Activated T-helper 1 cell treated with anti-CD3 and anti-CD28 coated beads, Interleukin-12 subunit alpha, Interleukin-12 subunit beta, Interleukin-2, Interleukin-4 antibody, amounts not matched to agents 30 ng/mL and 10 ng/mL and 1 ng/mL, durations not matched to agents 14 hours and 24 hours and 36 hours (primary cell): ENCODE measurements at regions of chr11 and their contacts with region 1.

Region 1: DNA sequence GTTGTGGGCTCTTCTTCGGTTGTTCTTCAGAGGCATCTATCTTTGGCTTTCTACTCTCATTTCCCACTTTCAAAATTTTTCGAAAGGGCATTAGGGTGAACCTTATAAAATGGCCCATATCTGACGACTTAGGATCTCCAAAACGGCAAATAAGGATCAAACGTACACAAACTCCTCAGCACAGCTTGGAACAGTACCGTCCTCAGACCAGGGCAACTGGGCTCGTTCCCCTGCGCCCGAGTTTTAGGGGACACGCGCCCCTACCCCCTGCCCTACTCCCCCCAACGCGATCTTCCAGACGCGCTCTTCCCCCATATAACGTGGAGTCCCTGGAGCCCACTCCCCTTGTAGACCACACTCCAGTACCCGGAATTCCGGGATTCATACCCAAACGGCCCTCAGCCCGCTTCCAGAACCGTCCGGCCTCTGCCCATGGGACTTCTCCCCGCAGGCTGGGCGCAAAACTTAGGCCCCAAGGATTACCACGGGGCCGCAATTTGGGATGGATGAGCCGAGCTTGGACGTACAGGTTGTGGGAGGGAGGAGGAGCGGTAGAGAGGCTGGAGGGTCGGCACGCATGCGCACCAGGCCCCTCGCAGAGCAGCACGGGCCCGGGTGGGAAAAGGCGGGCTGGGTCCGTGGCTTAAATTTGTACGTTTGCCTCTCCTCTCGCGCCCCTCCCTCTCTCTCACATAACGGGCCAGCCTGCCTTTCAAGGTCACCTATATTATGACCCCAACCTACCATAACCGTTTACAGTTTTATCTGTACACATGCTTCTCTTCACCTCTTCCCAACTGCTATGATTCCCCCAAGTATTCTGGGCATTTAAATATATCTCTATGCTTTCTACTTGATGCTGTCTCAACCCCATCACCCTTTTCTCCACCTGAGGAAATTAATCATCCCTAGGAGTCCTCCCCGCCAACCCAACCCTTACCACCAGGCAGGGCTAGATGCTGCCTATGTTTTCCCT is 3.4 kb downstream of the CCDC89 start:
- DNase-seq: peak; percentile 35
- H3K4me3 Mint-ChIP-seq: peak overlapping the region; percentile 83
- H3K27ac Mint-ChIP-seq: peak overlapping the region; percentile 78
- H3K4me1 Mint-ChIP-seq: peaks cover 16% of the 10 kb centered on the region
- H3K27me3 Mint-ChIP-seq: peaks cover 4% of the 10 kb centered on the region

Region 2: DNA sequence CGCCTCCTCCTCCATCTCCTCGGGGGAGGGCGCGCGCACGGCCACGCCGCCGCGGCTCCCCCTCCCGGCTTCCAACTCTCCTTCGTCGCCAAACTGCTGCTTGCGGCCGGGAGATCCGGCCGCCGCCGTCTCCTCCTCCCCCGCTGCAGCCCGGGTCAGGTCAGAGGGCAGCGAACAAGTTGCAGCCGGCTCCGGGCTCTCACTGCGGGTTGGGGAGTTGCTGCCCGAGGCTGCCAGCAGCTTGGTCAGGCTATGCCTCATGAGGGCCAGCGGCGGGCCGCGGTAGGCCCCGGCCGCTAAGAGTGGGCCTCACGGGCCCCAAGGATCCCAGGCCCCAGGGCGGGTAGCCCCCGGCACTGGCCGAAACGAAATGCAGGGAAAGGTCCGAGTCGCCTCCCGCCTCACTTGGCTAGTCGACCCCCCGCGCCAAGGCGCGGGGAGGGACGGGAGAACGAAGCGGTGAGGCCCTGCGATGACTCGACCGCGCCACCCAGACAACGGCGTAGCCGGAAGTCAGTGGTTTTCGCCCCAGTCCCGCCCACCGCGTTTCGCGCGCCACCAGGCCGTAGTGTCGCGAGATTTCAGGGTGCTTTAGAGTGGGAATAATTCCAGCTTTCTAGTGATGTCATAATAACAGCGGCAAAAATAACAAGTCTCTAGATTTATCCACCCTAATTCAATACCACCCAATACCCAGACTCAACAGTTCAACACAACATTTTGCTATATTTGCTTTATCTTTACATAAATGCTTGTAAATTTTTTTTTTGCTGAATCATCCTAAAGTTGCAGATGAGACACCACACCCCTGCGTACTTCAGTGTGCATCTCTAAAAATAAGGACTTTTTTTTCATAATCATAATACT is 17.8 kb before region 1 on chr11 and contains the start of gene CREBZF:
- intact Hi-C with region 1: loop called (anchors 1 kb)
- DNase-seq: peak; percentile 94
- H3K4me3 Mint-ChIP-seq: peak within 1 kb of the TSS; percentile 99
- H3K27ac Mint-ChIP-seq: peak within 1 kb of the TSS; percentile 97
- H3K4me1 Mint-ChIP-seq: peaks cover 51% of the 10 kb centered on the region
- H3K27me3 Mint-ChIP-seq: no peaks in the 10 kb centered on the region
- total RNA-seq, gene CREBZF: 52.0 and 55.9 TPM in 2 replicates

Region 3: GRCh38 chr11:85694386-85694980 is 11.9 kb after region 1 on chr11:
- intact Hi-C with region 1: loop called (anchors 1 kb)
- DNase-seq: no peak
- H3K4me3 Mint-ChIP-seq: no peak overlapping the region
- H3K27ac Mint-ChIP-seq: no peak overlapping the region
- H3K4me1 Mint-ChIP-seq: peaks cover 51% of the 10 kb centered on the region
- H3K27me3 Mint-ChIP-seq: peaks cover 4% of the 10 kb centered on the region